Caco-2 (cell line): ENCODE measurements at regions of chr2 and their contacts with region 1.

Region 1: GRCh38 chr2:28633746-28634145 is 117.9 kb upstream of the PPP1CB start:
- DNase-seq: peak; percentile 69 to 79
- H3K4me3 ChIP-seq: no peak overlapping the region
- H3K4me3 Mint-ChIP-seq: peak overlapping the region; percentile 8
- H3K27ac Mint-ChIP-seq: peak overlapping the region; percentile 68
- H3K4me1 ChIP-seq: peaks cover 34% of the 10 kb centered on the region
- H3K4me1 Mint-ChIP-seq: peaks cover 24% of the 10 kb centered on the region
- H3K27me3 ChIP-seq: no peaks in the 10 kb centered on the region
- H3K27me3 Mint-ChIP-seq: no peaks in the 10 kb centered on the region
- CTCF ChIP-seq: no peak

Region 2: DNA sequence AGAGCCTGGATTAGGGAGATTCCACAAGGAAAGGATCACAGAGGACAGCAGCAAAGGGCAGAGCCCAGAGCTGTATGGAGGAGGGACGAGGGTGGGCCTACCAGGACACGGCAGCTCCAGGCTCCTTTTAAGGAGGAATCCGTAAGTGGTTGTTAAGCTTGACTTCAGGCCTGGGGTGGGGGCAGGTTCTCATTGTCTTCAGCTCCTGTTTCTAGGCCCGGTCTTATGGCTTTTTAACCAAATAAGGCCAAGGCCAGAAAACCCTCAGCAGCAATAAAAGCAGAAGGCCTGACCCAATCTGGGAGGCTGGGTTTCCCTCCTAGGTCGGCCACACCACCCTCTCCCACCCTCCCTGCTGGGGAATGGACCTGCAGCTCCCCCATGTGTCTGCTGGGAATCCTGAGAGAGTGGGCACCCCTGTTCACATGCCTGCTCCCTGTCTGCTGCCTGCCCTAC is 26.7 kb before region 1 on chr2:
- CTCF ChIA-PET with region 1: no interaction called
- POLR2A ChIA-PET with region 1: no interaction called
- intact Hi-C with region 1: loop called (anchors 1 kb)
- DNase-seq: peak; percentile 56 to 57
- H3K4me3 ChIP-seq: no peak overlapping the region
- H3K4me3 Mint-ChIP-seq: no peak overlapping the region
- H3K27ac Mint-ChIP-seq: no peak overlapping the region
- H3K4me1 ChIP-seq: peaks cover 13% of the 10 kb centered on the region
- H3K4me1 Mint-ChIP-seq: peaks cover 7% of the 10 kb centered on the region
- H3K27me3 ChIP-seq: no peaks in the 10 kb centered on the region
- H3K27me3 Mint-ChIP-seq: no peaks in the 10 kb centered on the region
- CTCF ChIP-seq: peak in 1 of 2 experiments; percentile 37

Region 3: DNA sequence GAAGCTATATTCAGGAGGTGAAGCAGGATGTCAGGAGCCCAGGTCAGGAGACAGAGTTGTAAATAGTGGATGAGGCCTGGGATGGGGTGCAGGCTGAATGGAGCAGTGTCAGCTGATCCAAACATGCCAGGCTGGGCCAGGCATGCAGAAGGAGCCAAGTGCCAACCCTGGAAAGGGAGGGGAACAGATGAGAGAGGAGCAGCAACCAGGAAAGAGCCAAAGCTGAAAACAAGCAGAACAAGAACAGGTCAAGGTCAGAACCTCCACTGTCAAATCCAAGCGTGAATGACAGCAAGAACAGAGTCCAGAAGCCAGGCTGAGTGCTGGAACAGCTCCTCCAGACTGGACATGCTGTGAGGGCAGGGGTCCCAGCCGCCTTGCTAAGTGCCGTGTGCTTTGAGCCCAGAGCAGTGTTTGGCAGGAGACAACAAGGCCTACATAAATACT is 68.7 kb after region 1 on chr2:
- CTCF ChIA-PET with region 1: no interaction called
- POLR2A ChIA-PET with region 1: no interaction called
- intact Hi-C with region 1: no loop called
- DNase-seq: no peak
- H3K4me3 ChIP-seq: no peak overlapping the region
- H3K4me3 Mint-ChIP-seq: no peak overlapping the region
- H3K27ac Mint-ChIP-seq: no peak overlapping the region
- H3K4me1 ChIP-seq: no peaks in the 10 kb centered on the region
- H3K4me1 Mint-ChIP-seq: no peaks in the 10 kb centered on the region
- H3K27me3 ChIP-seq: no peaks in the 10 kb centered on the region
- H3K27me3 Mint-ChIP-seq: no peaks in the 10 kb centered on the region
- CTCF ChIP-seq: no peak